B cell (primary cell): ENCODE measurements at regions of chr3 and their contacts with region 1.

Region 1: GRCh38 chr3:182947888-182948287 is 32.5 kb downstream of the DCUN1D1 start:
- DNase-seq: no peak
- ATAC-seq: peak; percentile 21
- H3K4me3 ChIP-seq: no peak overlapping the region
- H3K4me3 Mint-ChIP-seq: no peak overlapping the region
- H3K27ac ChIP-seq: no peak overlapping the region
- H3K27ac Mint-ChIP-seq: no peak overlapping the region
- H3K4me1 ChIP-seq: no peaks in the 10 kb centered on the region
- H3K4me1 Mint-ChIP-seq: peaks cover 3% of the 10 kb centered on the region
- H3K27me3 ChIP-seq: no peaks in the 10 kb centered on the region
- H3K27me3 Mint-ChIP-seq: no peaks in the 10 kb centered on the region
- CTCF ChIP-seq: no peak

Region 2: DNA sequence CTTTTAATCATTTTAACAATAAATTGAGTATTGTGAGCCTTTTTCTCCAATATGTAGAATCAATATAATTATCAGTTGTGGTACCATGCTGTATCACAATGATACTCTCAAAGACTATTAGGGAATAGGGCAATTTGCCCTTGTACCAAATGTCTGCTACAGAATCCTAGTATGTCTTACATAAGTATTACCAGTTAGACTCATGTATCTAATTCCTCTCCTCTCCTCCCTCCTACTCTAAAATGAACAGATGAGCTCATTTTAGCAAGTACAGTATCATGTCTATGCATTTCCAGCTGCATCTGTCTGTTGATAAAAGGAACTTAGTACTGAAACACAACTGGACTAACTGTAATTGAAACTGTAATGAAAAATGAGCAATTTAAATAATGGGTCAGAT is 278.9 kb before region 1 on chr3:
- CTCF ChIA-PET with region 1: no interaction called
- POLR2A ChIA-PET with region 1: no interaction called
- intact Hi-C with region 1: no loop called
- DNase-seq: no peak
- ATAC-seq: no peak
- H3K4me3 ChIP-seq: no peak overlapping the region
- H3K4me3 Mint-ChIP-seq: no peak overlapping the region
- H3K27ac ChIP-seq: no peak overlapping the region
- H3K27ac Mint-ChIP-seq: no peak overlapping the region
- H3K4me1 ChIP-seq: no peaks in the 10 kb centered on the region
- H3K4me1 Mint-ChIP-seq: no peaks in the 10 kb centered on the region
- H3K27me3 ChIP-seq: peaks cover 0 to 3% (median 1%) of the 10 kb centered on the region in 4 experiments
- H3K27me3 Mint-ChIP-seq: peaks cover 42% of the 10 kb centered on the region
- CTCF ChIP-seq: no peak

Region 3: DNA sequence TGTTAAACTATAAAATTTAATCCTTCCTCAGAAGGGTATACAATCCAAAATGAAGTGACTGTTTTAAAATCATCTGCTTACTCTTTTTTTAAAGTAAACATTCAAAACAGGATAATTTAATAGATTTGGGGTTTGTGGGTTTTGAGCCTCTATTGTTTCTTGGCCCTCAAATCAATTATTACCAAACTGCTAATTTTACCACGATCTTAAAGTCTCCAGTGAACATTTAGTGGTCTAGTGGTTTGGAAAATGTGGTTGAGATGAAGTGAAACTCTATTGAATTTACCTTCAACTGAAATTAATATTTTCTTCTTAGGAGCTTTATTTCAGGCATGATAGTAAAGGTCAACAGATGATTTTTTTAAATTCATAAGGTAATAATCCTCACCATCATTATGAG is 165.7 kb before region 1 on chr3:
- CTCF ChIA-PET with region 1: no interaction called
- POLR2A ChIA-PET with region 1: no interaction called
- intact Hi-C with region 1: no loop called
- DNase-seq: no peak
- ATAC-seq: no peak
- H3K4me3 ChIP-seq: no peak overlapping the region
- H3K4me3 Mint-ChIP-seq: no peak overlapping the region
- H3K27ac ChIP-seq: no peak overlapping the region
- H3K27ac Mint-ChIP-seq: no peak overlapping the region
- H3K4me1 ChIP-seq: peaks cover 0 to 4% of the 10 kb centered on the region in 2 donors
- H3K4me1 Mint-ChIP-seq: peaks cover 3% of the 10 kb centered on the region
- H3K27me3 ChIP-seq: peaks cover 0 to 9% (median 0%) of the 10 kb centered on the region in 4 experiments
- H3K27me3 Mint-ChIP-seq: peaks cover 5% of the 10 kb centered on the region
- CTCF ChIP-seq: no peak

Region 4: GRCh38 chr3:182937293-182938051 is 10.4 kb before region 1 on chr3:
- CTCF ChIA-PET with region 1: no interaction called
- POLR2A ChIA-PET with region 1: interaction called, 12 read pairs
- intact Hi-C with region 1: no loop called
- DNase-seq: no peak
- ATAC-seq: peak; percentile 28
- H3K4me3 ChIP-seq: no peak overlapping the region
- H3K4me3 Mint-ChIP-seq: no peak overlapping the region
- H3K27ac ChIP-seq: no peak overlapping the region
- H3K27ac Mint-ChIP-seq: no peak overlapping the region
- H3K4me1 ChIP-seq: peaks cover 4 to 7% of the 10 kb centered on the region in 2 donors
- H3K4me1 Mint-ChIP-seq: peaks cover 18% of the 10 kb centered on the region
- H3K27me3 ChIP-seq: no peaks in the 10 kb centered on the region
- H3K27me3 Mint-ChIP-seq: no peaks in the 10 kb centered on the region
- CTCF ChIP-seq: no peak